GM12878 (cell line): ENCODE measurements at regions of chr12 and their contacts with region 1.

Region 1: DNA sequence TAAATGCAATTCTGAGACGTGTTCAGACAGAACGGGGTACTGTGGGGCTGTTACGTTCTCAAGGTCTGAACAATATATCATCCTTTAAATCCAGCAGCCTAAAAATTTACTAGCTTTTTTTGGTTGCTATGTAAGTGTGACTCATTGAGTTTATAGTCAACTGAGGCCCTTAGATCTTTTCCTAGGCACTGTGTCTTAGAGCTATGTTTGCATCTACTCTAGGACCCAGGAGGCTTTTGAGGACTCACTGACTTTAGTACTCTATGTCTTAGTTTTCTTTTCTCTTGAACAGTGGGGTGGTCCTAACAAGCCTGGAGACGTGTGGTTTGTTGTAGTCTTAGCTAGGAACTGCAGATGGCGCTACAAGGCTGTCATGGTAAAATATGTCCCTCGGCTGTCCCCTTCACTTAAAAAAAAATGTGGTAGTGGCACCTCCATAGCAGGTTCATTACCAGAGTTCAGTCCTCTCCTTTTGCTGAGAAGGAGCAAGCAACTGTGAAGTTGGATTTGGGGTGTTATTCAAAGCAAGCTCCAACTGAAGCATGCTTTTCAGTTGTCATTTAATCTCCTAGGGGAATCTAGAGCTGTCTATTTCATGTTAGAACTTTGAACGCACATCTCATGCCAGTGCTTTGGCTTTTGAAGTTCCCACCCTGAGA is 8.7 kb upstream of the SPATS2 start:
- DNase-seq: no peak
- ATAC-seq: peak; percentile 99
- H3K4me3 ChIP-seq: no peak overlapping the region
- H3K27ac ChIP-seq: no peak overlapping the region
- H3K4me1 ChIP-seq: no peaks in the 10 kb centered on the region
- H3K27me3 ChIP-seq: no peaks in the 10 kb centered on the region
- CTCF ChIP-seq: peak; percentile 81 to 91 (median 81)
- EP300 ChIP-seq: no peak
- POLR2A ChIP-seq: no peak
- RAD21 ChIP-seq: peak; percentile 98

Region 2: DNA sequence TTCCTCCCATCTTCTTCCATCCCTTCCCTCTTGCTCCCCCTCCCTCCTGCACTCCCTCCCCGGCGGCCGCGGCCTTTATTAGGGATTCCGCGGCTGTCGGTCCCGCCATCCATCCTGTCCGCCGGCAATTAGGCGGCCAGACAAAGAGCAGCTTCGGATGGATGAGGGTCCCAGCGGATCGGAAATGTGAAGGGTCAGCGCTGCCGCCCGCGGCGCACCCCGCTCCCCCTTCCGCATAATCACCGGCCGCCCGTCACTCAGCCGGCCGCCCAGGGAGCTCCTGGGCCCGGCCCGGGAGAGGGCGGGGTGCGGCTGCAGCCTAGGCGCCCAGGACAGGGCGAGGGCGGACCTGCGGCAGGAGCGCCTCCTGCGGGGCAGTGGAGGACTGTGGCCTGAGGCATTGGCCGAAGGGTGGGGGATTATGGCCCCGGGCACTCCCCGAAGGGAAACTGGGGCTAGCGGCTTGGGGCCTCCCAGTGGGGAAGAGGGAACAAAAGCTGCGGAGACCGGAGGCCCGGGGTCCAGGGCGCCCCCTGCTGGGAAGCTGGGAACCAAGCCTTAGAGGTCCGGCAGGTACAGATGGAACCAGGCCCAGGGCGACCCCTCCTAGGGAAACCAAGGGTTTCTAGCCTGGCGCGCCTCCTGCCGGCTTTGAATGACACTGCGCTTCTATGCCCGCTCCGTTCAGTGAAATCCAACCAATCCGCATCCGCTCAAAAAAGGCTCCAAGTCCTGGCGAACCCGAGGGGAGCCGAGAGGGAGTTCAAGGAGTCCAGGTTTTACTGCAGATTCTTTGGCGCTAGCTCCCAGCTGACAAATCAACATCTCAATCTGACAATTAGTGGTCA is 16.3 kb before region 1 on chr12:
- CTCF ChIA-PET with region 1: interaction called, 82 read pairs
- POLR2A ChIA-PET with region 1: no interaction called
- RAD21 ChIA-PET with region 1: interaction called, 22 read pairs
- SMC1A ChIA-PET with region 1: interaction called, 30 read pairs
- in situ Hi-C with region 1: no loop called
- intact Hi-C with region 1: no loop called
- DNase-seq: no peak
- ATAC-seq: peak; percentile 80
- H3K4me3 ChIP-seq: peak overlapping the region; percentile 8; the same call in 1 of the 2 replicates
- H3K27ac ChIP-seq: no peak overlapping the region
- H3K4me1 ChIP-seq: peaks cover 32% of the 10 kb centered on the region
- H3K27me3 ChIP-seq: peaks cover 24 to 33% of the 10 kb centered on the region in 2 experiments
- CTCF ChIP-seq: peak; percentile 72 to 91 (median 91)
- EP300 ChIP-seq: no peak
- POLR2A ChIP-seq: no peak
- RAD21 ChIP-seq: peak; percentile 44; the same call in 1 of the 2 replicates

Region 3: GRCh38 chr12:49428793-49429192 is 70.2 kb after region 1 on chr12:
- CTCF ChIA-PET with region 1: interaction called, 7 read pairs
- POLR2A ChIA-PET with region 1: no interaction called
- RAD21 ChIA-PET with region 1: interaction called, 8 read pairs
- SMC1A ChIA-PET with region 1: interaction called, 10 read pairs
- in situ Hi-C with region 1: no loop called
- intact Hi-C with region 1: no loop called
- DNase-seq: peak; percentile 38
- ATAC-seq: peak; percentile 87
- H3K4me3 ChIP-seq: peak overlapping the region; percentile 33; the same call in 1 of the 2 replicates
- H3K27ac ChIP-seq: peak overlapping the region; percentile 96
- H3K4me1 ChIP-seq: peaks cover 20% of the 10 kb centered on the region
- H3K27me3 ChIP-seq: no peaks in the 10 kb centered on the region
- CTCF ChIP-seq: no peak
- EP300 ChIP-seq: no peak
- POLR2A ChIP-seq: no peak
- RAD21 ChIP-seq: no peak

Region 4: DNA sequence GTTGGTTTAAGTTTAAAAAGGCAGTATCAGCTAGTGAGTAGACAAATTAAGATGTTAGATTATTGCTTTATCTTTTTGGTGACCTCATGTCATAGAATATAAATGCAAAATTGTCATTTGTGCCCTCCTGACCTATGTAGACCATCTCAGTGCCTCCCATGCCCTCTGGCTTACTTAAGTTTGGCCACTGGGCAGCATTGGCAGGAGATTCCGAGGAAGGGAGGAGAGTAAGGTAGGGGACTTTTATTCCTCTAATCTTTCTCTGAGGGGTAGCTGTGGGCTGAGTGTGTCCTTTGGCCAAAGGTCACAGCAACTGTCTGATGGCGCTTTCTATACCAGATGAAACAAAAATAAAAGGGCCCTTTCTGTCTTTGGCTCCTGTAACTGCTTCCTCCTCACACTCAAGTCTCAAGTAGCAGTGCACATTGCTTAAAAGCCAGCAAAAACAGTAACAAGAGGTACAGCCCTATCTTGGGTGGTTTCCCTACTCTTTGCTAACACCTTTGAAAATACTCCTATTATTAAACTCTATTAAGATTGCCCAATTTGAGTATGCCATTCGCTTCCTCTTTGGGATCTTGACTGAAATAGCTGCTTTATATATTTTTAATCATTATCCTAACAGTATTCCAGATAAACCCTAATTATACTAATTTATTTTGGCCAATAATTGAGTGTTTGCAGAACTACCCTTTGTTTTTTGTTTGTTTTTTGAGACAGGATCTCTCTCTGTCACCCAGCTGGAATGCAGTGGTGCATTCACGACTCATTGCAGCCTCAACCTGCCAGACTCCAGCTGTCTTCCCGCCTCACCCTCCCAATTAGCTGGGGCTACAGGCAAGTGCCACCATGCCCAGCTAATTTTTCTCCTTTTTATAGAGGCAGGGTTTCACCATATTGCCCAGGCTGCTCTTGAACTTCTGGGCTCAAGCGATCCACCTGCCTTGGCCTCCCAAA is 123.8 kb after region 1 on chr12:
- CTCF ChIA-PET with region 1: interaction called, 31 read pairs
- POLR2A ChIA-PET with region 1: no interaction called
- RAD21 ChIA-PET with region 1: interaction called, 5 read pairs
- SMC1A ChIA-PET with region 1: interaction called, 20 read pairs
- in situ Hi-C with region 1: no loop called
- intact Hi-C with region 1: no loop called
- DNase-seq: no peak
- ATAC-seq: peak; percentile 54
- H3K4me3 ChIP-seq: no peak overlapping the region
- H3K27ac ChIP-seq: no peak overlapping the region
- H3K4me1 ChIP-seq: peaks cover 2% of the 10 kb centered on the region
- H3K27me3 ChIP-seq: no peaks in the 10 kb centered on the region
- CTCF ChIP-seq: no peak
- EP300 ChIP-seq: no peak
- POLR2A ChIP-seq: no peak
- RAD21 ChIP-seq: no peak

Region 5: DNA sequence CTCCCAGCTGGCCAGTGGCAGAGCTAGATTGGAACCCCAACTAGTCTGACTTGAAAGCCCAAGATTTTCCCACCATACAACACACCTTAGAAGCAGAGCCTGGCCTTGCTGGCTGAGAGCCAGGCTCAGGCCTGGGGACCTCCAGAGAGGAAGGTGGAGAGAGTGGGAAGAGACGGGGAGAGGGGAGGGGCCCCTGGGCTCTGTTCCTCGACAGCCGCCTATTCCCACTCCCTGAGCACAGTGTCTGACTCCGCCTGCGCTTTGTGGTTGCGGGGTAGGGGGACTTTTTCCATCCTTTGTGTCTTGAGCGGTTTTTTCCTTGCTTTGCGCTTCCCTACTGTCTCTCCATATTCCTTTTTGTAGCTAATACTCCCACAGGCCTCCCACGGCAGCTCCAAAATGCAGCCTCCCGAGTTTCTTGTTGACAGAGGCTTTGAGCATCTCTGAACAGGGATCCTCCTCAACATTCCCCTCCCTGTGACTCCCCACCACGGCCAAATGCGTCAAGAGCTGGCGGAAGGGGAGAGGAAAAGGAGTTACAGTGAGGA is 176.2 kb after region 1 on chr12:
- CTCF ChIA-PET with region 1: interaction called, 10 read pairs
- POLR2A ChIA-PET with region 1: no interaction called
- RAD21 ChIA-PET with region 1: interaction called, 4 read pairs
- SMC1A ChIA-PET with region 1: interaction called, 740 read pairs
- in situ Hi-C with region 1: no loop called
- intact Hi-C with region 1: no loop called
- DNase-seq: no peak
- ATAC-seq: no peak
- H3K4me3 ChIP-seq: no peak overlapping the region
- H3K27ac ChIP-seq: no peak overlapping the region
- H3K4me1 ChIP-seq: peaks cover 14% of the 10 kb centered on the region
- H3K27me3 ChIP-seq: peaks cover 10 to 13% of the 10 kb centered on the region in 2 experiments
- CTCF ChIP-seq: no peak
- EP300 ChIP-seq: no peak
- POLR2A ChIP-seq: no peak
- RAD21 ChIP-seq: no peak

Region 6: DNA sequence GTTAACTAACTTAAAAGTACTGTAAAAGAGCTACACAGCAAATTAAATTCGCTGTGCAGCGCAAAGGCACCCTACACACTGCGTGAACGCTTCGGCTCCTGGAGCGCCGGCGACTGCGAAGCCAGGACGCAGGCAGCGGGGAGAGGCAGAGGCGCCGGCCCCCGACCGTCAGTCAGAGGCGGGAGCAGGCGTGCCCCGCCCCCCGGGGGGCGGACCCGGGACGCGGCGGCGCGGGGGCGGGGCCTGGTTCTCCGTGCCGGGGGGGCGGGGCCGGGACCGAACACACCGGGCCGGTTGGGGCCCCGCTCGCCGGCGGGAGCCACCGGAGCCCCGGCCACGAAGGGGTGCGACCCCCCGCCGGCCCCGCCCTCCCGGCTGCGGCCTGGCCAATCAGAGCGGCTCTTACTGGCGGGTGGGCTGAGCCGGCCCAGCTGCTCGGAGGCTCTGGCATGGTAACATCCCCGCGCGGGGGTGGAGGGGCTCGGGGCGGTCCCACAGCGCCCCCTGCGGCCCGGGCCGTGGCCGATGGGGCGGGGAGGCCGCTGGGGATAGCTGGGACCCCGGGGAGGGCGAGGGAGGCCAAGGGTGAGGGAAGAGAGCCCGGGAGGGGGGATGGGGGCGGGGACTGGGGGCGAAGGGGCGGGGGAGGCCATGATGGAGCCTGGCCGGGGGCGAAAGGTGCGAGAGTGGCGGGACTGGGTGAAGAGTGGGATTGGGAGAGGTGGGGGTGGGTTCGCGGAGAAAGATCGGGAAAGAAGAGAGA is 264.7 kb after region 1 on chr12 and contains the start of gene PRPF40B:
- CTCF ChIA-PET with region 1: interaction called, 25 read pairs
- POLR2A ChIA-PET with region 1: interaction called, 3 read pairs
- RAD21 ChIA-PET with region 1: interaction called, 19 read pairs
- SMC1A ChIA-PET with region 1: interaction called, 7 read pairs
- in situ Hi-C with region 1: no loop called
- intact Hi-C with region 1: no loop called
- DNase-seq: peak; percentile 36
- ATAC-seq: peak; percentile 87
- H3K4me3 ChIP-seq: peak within 1 kb of the TSS; percentile 85
- H3K27ac ChIP-seq: peak within 1 kb of the TSS; percentile 75
- H3K4me1 ChIP-seq: peaks cover 17% of the 10 kb centered on the region
- H3K27me3 ChIP-seq: no peaks in the 10 kb centered on the region
- CTCF ChIP-seq: peak; percentile 33 to 66 (median 57)
- EP300 ChIP-seq: no peak
- POLR2A ChIP-seq: peak; percentile 90
- RAD21 ChIP-seq: peak; percentile 40; the same call in 1 of the 2 replicates
- polyA plus RNA-seq, gene PRPF40B: 0.31 to 1.2 TPM